Cardiac septum (tissue), 1 donor: ENCODE measurements at regions of chr9 and their contacts with region 1.

Region 1: DNA sequence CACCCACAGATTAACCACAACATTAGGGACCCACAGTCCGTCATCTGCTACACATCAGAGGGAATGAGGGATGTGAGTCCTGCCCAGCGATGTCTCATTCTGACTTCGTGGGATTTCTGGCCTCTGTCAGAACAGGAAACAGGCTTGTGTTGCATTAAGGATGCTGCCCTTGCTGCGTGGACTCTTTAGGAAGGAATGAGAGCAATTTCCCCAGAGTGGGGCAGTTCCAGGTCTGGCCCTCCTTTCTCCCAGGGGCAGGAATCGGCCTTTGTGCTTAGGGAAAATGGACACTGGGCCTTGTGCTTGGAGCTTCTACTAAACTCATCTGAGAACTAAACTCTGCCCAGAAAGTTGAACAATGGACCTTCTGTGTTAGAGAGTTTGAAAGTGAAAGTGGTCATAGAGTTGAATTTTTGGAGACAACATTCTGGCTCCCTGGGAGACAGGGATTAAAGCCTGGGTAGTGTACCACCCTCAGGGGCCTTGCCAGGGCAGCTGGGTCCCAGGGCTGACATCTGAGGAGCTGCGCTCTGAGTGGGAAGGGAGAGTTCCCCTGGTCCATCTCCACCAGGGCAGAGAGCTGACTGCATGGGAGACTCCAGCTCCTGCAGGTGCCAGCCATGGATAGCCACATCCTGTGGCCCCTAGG is 37.8 kb upstream of the S1PR3 start:
- DNase-seq: no peak

Region 2: DNA sequence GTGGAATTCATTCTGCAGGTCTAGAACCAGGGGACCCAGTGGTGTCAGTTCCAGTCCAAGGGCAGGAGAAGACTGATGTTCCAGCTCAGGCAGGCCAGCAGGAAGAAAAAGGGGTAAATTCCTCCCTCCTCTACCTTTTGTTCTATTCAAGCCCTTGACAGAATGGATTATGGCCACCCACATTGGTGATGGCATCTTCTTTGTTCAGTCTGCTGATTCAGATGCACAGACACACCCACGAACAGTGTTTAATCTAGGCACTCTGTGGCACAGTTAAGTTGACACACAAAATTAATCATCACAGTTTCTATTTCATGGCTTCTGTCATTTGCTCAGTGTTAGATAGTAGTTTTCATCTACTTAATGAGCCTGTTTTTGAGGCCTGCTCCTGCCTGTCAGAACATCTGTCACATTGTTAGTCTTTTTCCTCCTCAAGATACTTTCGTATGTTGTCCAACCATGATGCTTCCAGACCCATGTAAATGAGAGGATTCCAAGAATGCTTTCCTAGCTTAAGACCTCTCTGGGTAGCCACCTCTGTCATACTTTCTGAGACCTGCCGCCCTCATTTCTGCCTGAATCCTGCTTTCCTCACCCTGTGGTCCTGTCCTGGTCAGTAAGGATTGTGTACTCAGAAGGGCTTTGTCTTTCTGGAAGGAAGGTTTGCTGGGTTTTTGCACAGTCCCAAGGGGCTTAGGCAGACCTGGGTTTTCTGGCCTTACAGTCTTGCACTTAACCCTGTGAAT is 492.7 kb before region 1 on chr9:
- intact Hi-C with region 1: no loop called
- DNase-seq: no peak

Region 3: DNA sequence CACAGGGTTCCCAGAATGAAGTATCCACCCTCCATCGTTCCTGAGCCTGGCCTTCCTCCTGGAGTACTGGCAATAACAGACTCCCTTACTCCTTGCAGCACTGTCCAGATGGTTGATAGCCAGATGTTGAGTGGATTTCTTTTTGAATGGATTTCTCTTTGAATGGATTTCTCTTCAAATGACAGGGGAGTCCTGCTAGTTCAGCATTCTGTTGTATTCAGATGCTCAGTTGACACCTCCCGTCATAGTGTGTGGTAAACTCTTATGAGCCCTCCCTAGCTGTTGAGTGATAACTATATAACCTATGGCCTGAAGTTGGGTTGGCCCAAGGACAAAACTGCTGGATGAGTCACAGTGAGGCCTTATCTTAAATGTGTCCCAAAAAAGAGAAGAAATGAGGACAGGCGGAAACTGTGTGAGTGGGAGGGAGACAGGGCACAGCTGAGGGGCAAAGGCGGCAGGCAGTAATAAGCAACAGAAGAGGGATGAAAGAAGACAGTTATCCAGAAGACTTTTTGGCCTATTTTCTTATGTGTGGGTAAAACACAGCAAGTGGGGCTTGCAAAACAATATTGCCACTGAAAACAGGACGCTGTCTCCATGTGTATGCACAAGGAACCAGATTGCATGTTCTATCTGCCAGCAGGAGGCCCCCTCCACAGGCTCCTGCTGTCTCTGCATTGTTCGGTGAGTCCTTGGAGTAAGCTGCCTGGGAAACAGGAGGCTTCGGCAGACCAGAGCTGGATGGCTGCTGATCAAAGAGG is 171.7 kb before region 1 on chr9:
- intact Hi-C with region 1: no loop called
- DNase-seq: no peak

Region 4: DNA sequence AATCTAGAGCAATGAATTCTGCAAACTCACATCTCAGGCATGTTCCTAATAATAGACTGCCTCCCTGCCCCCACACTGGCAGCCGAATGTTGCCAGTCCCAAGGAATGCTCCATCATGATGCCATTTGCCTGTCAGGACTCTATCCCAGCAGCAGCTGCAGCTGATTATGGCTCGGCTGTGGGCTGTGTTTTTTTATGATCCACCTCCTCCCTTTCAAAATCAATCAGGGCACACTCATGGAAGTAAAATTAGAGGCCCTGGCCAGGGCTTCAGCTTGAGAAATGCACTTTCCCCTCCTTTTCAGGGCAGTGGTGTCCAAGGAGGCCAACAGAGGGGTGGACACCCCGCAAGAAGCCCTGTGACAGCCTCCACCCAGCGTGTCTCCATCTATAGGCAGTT is 138.9 kb before region 1 on chr9:
- intact Hi-C with region 1: loop called (anchors 10 kb)
- DNase-seq: peak; percentile 82